H1 (cell line): ENCODE measurements at regions of chr14 and their contacts with region 1.

Region 1: GRCh38 chr14:104708606-104709268 is 15.3 kb upstream of the ADSS1 start:
- DNase-seq: peak; percentile 54 to 96
- H3K4me3 ChIP-seq: no peak overlapping the region
- H3K27ac ChIP-seq: no peak overlapping the region
- H3K4me1 ChIP-seq: peaks cover 0 to 15% (median 13%) of the 10 kb centered on the region in 4 experiments; a peak in 5 of 7 replicates
- H3K27me3 ChIP-seq: no peaks in the 10 kb centered on the region
- CTCF ChIP-seq: peak in 2 of 3 experiments; percentile 96 to 98; a peak in 3 of 4 replicates
- EP300 ChIP-seq: peak in 1 of 2 experiments; percentile 14; a peak in 1 of 3 replicates
- POLR2A ChIP-seq: 0 out of 3 replicates have a peak, but pooled peaks of 1 of the 2 experiments have one; percentile 19
- RAD21 ChIP-seq: peak; percentile 81 to 89

Region 2: DNA sequence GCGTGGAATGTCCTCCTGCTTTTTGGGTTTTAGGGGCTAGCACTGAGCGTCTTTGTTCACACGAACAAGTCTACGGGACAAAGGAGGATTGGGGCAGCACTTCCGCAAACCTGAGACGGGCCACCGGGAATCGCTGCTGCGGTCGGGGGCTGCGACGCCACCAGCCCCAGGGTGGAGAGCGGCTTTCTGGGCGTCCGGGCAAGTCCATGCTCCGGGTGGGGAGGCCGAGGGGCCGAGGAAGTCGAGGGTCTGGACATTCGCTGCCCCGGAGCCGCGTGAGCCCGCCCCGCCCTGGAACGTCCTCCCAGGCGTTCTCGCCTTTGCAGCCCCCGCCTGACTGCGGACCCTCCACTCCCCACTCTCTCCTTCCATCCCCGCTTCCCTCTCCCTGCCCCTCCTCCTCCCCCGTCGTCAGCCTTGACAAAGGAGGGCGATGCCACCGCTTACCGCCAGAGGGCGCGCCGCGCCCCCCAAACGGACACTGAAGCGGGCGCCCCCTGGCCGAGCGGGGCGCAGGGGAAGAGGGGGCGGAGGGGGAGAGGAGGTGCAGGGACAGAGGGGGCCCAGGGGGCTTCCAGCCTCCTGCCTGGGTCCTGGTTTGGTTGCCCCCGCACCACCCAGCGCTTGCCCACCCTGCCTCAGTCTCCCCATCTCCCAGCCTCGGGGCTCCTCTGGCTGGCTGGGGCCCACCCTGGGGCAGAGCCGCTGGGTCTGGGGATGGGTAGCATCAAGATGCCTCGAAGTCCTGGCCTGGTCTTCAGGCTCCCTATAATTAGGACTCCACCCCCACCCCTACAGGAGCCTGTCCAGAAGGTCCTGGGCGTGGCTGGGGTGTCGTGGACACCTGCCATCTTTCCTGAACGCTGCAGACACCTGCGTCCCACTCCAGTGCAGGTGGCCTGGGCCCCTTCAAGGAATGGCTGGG is 58.4 kb before region 1 on chr14:
- CTCF ChIA-PET with region 1: interaction called, 17 read pairs
- POLR2A ChIA-PET with region 1: interaction called, 3 read pairs
- DNase-seq: peak; percentile 60 to 99
- H3K4me3 ChIP-seq: peak overlapping the region; percentile 63 to 92 (median 81)
- H3K27ac ChIP-seq: no peak overlapping the region
- H3K4me1 ChIP-seq: no peaks in the 10 kb centered on the region; a peak in 1 of 7 replicates
- H3K27me3 ChIP-seq: peaks cover 0 to 2% (median under 1%) of the 10 kb centered on the region in 4 experiments; a peak in 2 of 7 replicates
- CTCF ChIP-seq: peak; percentile 91 to 99 (median 99)
- EP300 ChIP-seq: peak in 1 of 2 experiments; percentile 35; a peak in 1 of 3 replicates
- POLR2A ChIP-seq: 0 out of 3 replicates have a peak, but pooled peaks of 1 of the 2 experiments have one; percentile 33
- RAD21 ChIP-seq: peak; percentile 87 to 95

Region 3: GRCh38 chr14:104694991-104695659 is 13.6 kb before region 1 on chr14:
- CTCF ChIA-PET with region 1: interaction called, 10 read pairs
- POLR2A ChIA-PET with region 1: interaction called, 6 read pairs
- DNase-seq: no peak
- H3K4me3 ChIP-seq: no peak overlapping the region
- H3K27ac ChIP-seq: no peak overlapping the region
- H3K4me1 ChIP-seq: peaks cover 0 to 33% (median 25%) of the 10 kb centered on the region in 4 experiments; a peak in 6 of 7 replicates
- H3K27me3 ChIP-seq: no peaks in the 10 kb centered on the region; a peak in 1 of 7 replicates
- CTCF ChIP-seq: no peak
- EP300 ChIP-seq: no peak
- POLR2A ChIP-seq: no peak
- RAD21 ChIP-seq: no peak

Region 4: GRCh38 chr14:104723648-104724406 is 15.1 kb after region 1 on chr14 and contains the start of gene ADSS1:
- CTCF ChIA-PET with region 1: interaction called, 16 read pairs
- POLR2A ChIA-PET with region 1: interaction called, 10 read pairs
- DNase-seq: peak in 1 of 2 experiments; percentile 84
- H3K4me3 ChIP-seq: peak within 1 kb of the TSS; percentile 55 to 88 (median 68)
- H3K27ac ChIP-seq: no peak within 1 kb of the TSS; the same call in 1 of the 2 replicates
- H3K4me1 ChIP-seq: peaks cover 0 to 18% (median 10%) of the 10 kb centered on the region in 4 experiments; a peak in 6 of 7 replicates
- H3K27me3 ChIP-seq: peaks cover 0 to 3% (median 0%) of the 10 kb centered on the region in 4 experiments; a peak in 1 of 7 replicates
- CTCF ChIP-seq: peak in 2 of 3 experiments; percentile 82 to 84; a peak in 3 of 4 replicates
- EP300 ChIP-seq: no peak
- POLR2A ChIP-seq: 0 out of 3 replicates have a peak, but pooled peaks of 1 of the 2 experiments have one; percentile 58
- RAD21 ChIP-seq: peak; percentile 8 to 42; a peak in 1 of 4 replicates
- total RNA-seq, gene ADSS1: 7.9 and 8.9 TPM in 2 replicates